ENCODE measurements at regions of chr22 and their contacts with region 1.

Region 1: GRCh38 chr22:45096256-45096907 is 67.3 kb upstream of the NUP50 start:
- DNase-seq: peak in 1 of 2 donors; percentile 38
- H3K4me3 ChIP-seq: no peak overlapping the region
- CTCF ChIP-seq: no peak
- POLR2A ChIP-seq: no peak

Region 2: GRCh38 chr22:43363315-43364168 is 1732.8 kb before region 1 on chr22:
- intact Hi-C with region 1: no loop called
- DNase-seq: no peak
- H3K4me3 ChIP-seq: no peak overlapping the region
- CTCF ChIP-seq: no peak
- POLR2A ChIP-seq: no peak

Region 3: GRCh38 chr22:44828193-44828592 is 268.2 kb before region 1 on chr22:
- intact Hi-C with region 1: loop called (anchors 10 kb)
- DNase-seq: no peak
- H3K4me3 ChIP-seq: no peak overlapping the region
- CTCF ChIP-seq: no peak
- POLR2A ChIP-seq: no peak

Region 4: GRCh38 chr22:45462034-45462690 is 365.8 kb after region 1 on chr22:
- intact Hi-C with region 1: no loop called
- DNase-seq: no peak
- H3K4me3 ChIP-seq: no peak overlapping the region
- CTCF ChIP-seq: no peak
- POLR2A ChIP-seq: no peak

Measured in lower leg skin (tissue), 4 donors.